ENCODE measurements at regions of chr9 and their contacts with region 1.

Region 1: GRCh38 chr9:71768388-71769174 is at the start of gene CEMIP2:
- DNase-seq: peak; percentile 92
- ATAC-seq: peak; percentile 84
- H3K4me3 Mint-ChIP-seq: peak within 1 kb of the TSS; percentile 89
- H3K27ac Mint-ChIP-seq: peak within 1 kb of the TSS; percentile 90
- H3K4me1 Mint-ChIP-seq: peaks cover 45% of the 10 kb centered on the region
- H3K27me3 Mint-ChIP-seq: no peaks in the 10 kb centered on the region
- total RNA-seq, gene CEMIP2: 46.5 TPM

Region 2: GRCh38 chr9:71604197-71605063 is 164.2 kb before region 1 on chr9:
- CTCF ChIA-PET with region 1: interaction called, 35 read pairs
- POLR2A ChIA-PET with region 1: interaction called, 3 read pairs
- DNase-seq: peak; percentile 88
- ATAC-seq: peak; percentile 89
- H3K4me3 Mint-ChIP-seq: no peak overlapping the region
- H3K27ac Mint-ChIP-seq: no peak overlapping the region
- H3K4me1 Mint-ChIP-seq: no peaks in the 10 kb centered on the region
- H3K27me3 Mint-ChIP-seq: peaks cover 9% of the 10 kb centered on the region

Region 3: GRCh38 chr9:71783120-71783530 is 14.5 kb after region 1 on chr9:
- CTCF ChIA-PET with region 1: interaction called, 100 read pairs
- POLR2A ChIA-PET with region 1: interaction called, 22 read pairs
- DNase-seq: peak; percentile 90
- ATAC-seq: peak; percentile 96
- H3K4me3 Mint-ChIP-seq: peak overlapping the region; percentile 67
- H3K27ac Mint-ChIP-seq: peak overlapping the region; percentile 99
- H3K4me1 Mint-ChIP-seq: peaks cover 53% of the 10 kb centered on the region
- H3K27me3 Mint-ChIP-seq: no peaks in the 10 kb centered on the region

Region 4: GRCh38 chr9:71819115-71819739 is 50.6 kb after region 1 on chr9:
- CTCF ChIA-PET with region 1: interaction called, 16 read pairs
- POLR2A ChIA-PET with region 1: no interaction called
- DNase-seq: peak; percentile 54
- ATAC-seq: no peak
- H3K4me3 Mint-ChIP-seq: no peak overlapping the region
- H3K27ac Mint-ChIP-seq: no peak overlapping the region
- H3K4me1 Mint-ChIP-seq: peaks cover 18% of the 10 kb centered on the region
- H3K27me3 Mint-ChIP-seq: no peaks in the 10 kb centered on the region

Region 5: GRCh38 chr9:71830929-71831328 is 62.3 kb after region 1 on chr9:
- CTCF ChIA-PET with region 1: no interaction called
- POLR2A ChIA-PET with region 1: no interaction called
- DNase-seq: no peak
- ATAC-seq: no peak
- H3K4me3 Mint-ChIP-seq: no peak overlapping the region
- H3K27ac Mint-ChIP-seq: no peak overlapping the region
- H3K4me1 Mint-ChIP-seq: no peaks in the 10 kb centered on the region
- H3K27me3 Mint-ChIP-seq: peaks cover 5% of the 10 kb centered on the region